ENCODE measurements at regions of chr4 and their contacts with region 1.

Region 1: DNA sequence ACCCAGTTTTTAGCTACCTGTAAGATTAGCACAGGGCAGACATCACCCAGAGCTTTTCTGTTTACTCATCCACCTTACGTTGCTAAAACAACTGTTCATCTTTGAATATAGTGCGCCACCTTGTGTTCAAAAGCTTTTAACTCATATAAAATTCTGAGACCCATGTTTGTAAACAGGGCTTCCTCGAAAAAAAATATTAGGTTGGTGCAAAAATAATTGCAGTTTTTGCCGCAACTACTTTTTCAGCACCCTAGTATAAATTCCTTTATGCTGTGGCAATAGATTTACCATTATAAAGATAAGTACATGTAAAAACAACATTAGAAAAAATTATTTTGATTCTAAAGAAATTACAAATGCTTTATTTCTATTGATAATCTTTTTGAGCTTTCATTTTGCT is 147.9 kb downstream of the LRBA start:
- DNase-seq: peak; percentile 84
- H3K4me3 ChIP-seq: no peak overlapping the region
- H3K27ac ChIP-seq: no peak overlapping the region
- H3K4me1 ChIP-seq: no peaks in the 10 kb centered on the region
- H3K27me3 ChIP-seq: no peaks in the 10 kb centered on the region
- CTCF ChIP-seq: peak; percentile 20 to 30
- POLR2A ChIP-seq: no peak

Region 2: GRCh38 chr4:150010525-150011126 is 856.5 kb before region 1 on chr4:
- CTCF ChIA-PET with region 1: interaction called, 20 read pairs
- POLR2A ChIA-PET with region 1: no interaction called
- dilution Hi-C with region 1: no loop called
- intact Hi-C with region 1: no loop called
- DNase-seq: peak; percentile 69
- H3K4me3 ChIP-seq: no peak overlapping the region
- H3K27ac ChIP-seq: no peak overlapping the region
- H3K4me1 ChIP-seq: no peaks in the 10 kb centered on the region
- H3K27me3 ChIP-seq: no peaks in the 10 kb centered on the region
- CTCF ChIP-seq: peak; percentile 42 to 49
- POLR2A ChIP-seq: no peak

Region 3: DNA sequence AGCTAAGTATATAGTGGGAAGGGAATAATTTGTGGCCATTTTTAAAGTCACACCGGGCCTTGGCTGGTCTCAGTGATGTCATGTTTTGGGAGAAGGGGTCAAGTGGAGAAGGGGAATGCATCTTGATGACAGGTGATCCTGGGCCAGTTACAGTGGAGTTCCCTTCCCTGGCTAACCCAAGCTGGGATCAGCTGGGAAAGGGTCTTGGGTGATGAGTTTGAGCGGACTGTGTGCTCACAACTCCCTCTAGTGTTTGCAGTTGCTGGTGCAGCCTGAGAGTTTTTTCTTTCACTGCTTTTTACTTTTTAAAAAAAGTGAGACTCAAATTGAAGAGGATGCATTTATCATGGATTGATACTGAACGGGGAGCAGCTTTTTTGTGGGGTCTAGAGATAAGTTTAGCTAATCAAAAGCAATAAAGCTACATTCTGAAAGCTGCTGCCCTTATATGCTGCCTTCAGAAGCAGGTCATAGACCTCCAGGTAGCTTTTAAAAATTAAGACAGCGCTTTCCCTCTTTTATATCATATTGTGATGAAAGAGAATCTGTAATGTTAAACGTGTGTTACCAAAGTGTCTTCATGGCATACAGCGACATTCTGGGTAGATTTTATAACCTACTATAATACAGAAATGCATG is 624.2 kb before region 1 on chr4:
- CTCF ChIA-PET with region 1: interaction called, 28 read pairs
- POLR2A ChIA-PET with region 1: no interaction called
- dilution Hi-C with region 1: no loop called
- intact Hi-C with region 1: no loop called
- DNase-seq: peak; percentile 67
- H3K4me3 ChIP-seq: no peak overlapping the region
- H3K27ac ChIP-seq: no peak overlapping the region
- H3K4me1 ChIP-seq: peaks cover 8% of the 10 kb centered on the region
- H3K27me3 ChIP-seq: no peaks in the 10 kb centered on the region
- CTCF ChIP-seq: peak; percentile 87 to 89
- POLR2A ChIP-seq: no peak

Region 4: DNA sequence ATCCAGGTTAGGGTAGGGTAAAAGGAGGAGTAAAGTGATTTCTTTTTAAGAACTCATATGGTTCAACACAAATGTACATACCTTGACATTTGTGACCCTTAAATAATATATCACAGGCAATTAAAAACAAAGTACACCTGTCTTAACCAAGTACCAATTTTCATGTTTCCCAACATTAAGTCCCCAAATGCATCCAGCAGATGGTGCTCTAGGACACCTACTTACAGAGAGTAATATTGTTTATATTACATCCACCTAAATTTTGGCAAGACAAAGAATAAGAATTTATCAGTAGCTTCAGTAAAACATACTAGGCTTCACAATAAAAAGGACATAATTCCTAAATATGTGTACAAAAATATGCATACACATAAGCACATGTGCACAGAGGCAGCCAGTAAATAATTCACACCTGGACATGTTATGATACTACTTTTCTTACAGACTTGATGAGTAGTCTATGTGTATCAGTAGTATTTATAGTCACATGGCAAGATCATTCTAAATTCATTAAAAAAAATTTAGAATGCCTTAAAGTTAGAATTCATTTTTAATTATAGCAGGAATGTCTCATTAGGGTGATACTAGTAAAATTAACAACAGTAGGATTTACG is 569.2 kb before region 1 on chr4:
- CTCF ChIA-PET with region 1: interaction called, 212 read pairs
- POLR2A ChIA-PET with region 1: no interaction called
- dilution Hi-C with region 1: no loop called
- intact Hi-C with region 1: loop called (anchors 1 kb)
- DNase-seq: peak; percentile 79
- H3K4me3 ChIP-seq: no peak overlapping the region
- H3K27ac ChIP-seq: no peak overlapping the region
- H3K4me1 ChIP-seq: peaks cover 12% of the 10 kb centered on the region
- H3K27me3 ChIP-seq: no peaks in the 10 kb centered on the region
- CTCF ChIP-seq: peak; percentile 29 to 35
- POLR2A ChIP-seq: no peak

Region 5: DNA sequence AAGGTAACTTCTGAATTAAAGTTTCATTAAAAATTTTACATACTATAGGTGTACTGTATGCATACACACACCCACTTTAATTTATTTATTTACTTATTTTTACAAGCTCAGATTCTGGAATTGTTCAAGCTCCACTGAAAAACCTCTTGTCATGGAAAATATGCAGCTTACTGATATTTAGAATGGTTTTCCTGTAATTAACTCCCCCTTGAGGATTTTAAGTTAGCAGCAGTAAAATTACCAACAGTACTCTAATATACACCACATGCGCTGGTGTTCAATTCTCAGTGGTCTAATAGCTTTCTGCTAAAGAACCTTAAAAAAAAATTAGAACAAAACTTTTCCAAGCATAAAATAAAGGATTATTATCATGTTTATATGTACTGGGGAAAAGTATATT is 273.2 kb before region 1 on chr4:
- CTCF ChIA-PET with region 1: interaction called, 19 read pairs
- POLR2A ChIA-PET with region 1: no interaction called
- dilution Hi-C with region 1: no loop called
- intact Hi-C with region 1: loop called (anchors 5 kb)
- DNase-seq: peak; percentile 38
- H3K4me3 ChIP-seq: no peak overlapping the region
- H3K27ac ChIP-seq: no peak overlapping the region
- H3K4me1 ChIP-seq: no peaks in the 10 kb centered on the region
- H3K27me3 ChIP-seq: no peaks in the 10 kb centered on the region
- CTCF ChIP-seq: peak in 1 of 2 donors; percentile 9
- POLR2A ChIP-seq: no peak

Region 6: GRCh38 chr4:150960818-150961217 is 93.7 kb after region 1 on chr4:
- CTCF ChIA-PET with region 1: interaction called, 49 read pairs
- POLR2A ChIA-PET with region 1: no interaction called
- dilution Hi-C with region 1: no loop called
- intact Hi-C with region 1: loop called (anchors 5 kb)
- DNase-seq: peak; percentile 46
- H3K4me3 ChIP-seq: no peak overlapping the region
- H3K27ac ChIP-seq: no peak overlapping the region
- H3K4me1 ChIP-seq: peaks cover 22% of the 10 kb centered on the region
- H3K27me3 ChIP-seq: no peaks in the 10 kb centered on the region
- CTCF ChIP-seq: peak; percentile 52 to 57
- POLR2A ChIP-seq: no peak

Region 7: DNA sequence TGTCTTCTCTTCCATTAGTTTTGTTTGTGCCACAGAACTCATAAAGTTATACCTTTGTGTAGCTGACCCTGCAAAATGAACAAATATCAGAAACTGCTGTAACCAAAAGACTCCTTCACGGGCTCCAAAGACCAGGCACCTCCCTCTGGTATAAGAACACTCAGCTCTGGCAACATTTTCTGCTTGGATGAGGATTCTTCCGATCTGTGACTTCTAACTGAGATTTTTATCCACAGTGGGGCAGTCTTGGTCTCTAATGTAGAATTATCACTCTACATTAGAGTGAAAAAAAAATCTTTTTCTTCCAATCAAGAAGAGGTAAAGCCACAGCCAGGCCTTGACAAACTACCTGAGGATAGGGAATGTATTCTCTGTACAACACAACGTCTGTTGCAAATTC is 371.3 kb after region 1 on chr4:
- CTCF ChIA-PET with region 1: no interaction called
- POLR2A ChIA-PET with region 1: no interaction called
- dilution Hi-C with region 1: no loop called
- intact Hi-C with region 1: no loop called
- DNase-seq: peak; percentile 59
- H3K4me3 ChIP-seq: no peak overlapping the region
- H3K27ac ChIP-seq: no peak overlapping the region
- H3K4me1 ChIP-seq: no peaks in the 10 kb centered on the region
- H3K27me3 ChIP-seq: no peaks in the 10 kb centered on the region
- CTCF ChIP-seq: peak in 1 of 2 donors; percentile 5
- POLR2A ChIP-seq: no peak

Measured in endothelial cell of umbilical vein (primary cell).